ENCODE measurements at regions of chr1 and their contacts with region 1.

Region 1: DNA sequence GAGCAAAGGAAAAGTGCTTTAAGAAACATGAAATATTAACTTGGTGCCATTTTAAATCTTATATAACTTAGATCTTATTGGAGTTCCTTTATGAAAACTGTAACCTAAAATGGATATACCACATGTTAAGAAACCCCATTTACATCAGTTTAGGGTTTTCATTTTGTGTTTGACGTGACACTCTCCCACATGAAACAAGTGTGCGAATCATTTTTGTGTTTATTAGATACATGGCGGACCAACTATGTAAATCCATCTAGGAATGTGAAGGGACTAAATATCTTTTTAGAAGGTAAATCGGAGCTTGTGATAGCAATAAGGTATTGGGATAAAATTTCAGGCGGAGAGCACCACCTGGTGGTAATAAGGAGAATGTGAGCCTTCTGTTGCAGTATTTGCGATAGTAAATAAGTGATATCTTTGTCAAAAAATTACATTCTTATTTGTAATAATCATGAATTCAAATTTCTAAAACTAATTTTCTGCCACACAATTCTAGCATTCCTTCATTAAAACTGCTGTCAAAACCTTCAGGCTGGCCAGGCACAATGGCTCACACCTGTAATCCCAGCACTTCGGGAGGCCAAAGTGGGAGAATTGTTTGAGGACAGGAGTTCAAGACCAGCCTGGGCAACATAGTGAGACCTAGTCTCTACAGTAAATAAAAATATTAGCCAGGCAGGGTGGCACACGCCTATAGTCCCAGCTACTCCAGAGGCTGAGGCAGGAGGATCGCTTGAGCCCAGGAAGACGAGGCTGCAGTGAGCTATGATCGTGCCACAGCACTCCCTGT is 31.3 kb downstream of the SMAP2 start:
- DNase-seq: no peak
- ATAC-seq: peak; percentile 74
- H3K4me3 ChIP-seq: no peak overlapping the region
- H3K4me1 ChIP-seq: no peaks in the 10 kb centered on the region
- CTCF ChIP-seq: peak; percentile 53

Region 2: GRCh38 chr1:40143891-40144575 is 260.8 kb before region 1 on chr1:
- intact Hi-C with region 1: loop called in 1 of 2 experiments (anchors 10 kb)
- DNase-seq: peak in 2 of 3 donors; percentile 31 to 86
- ATAC-seq: peak; percentile 78
- H3K4me3 ChIP-seq: no peak overlapping the region
- H3K4me1 ChIP-seq: no peaks in the 10 kb centered on the region
- CTCF ChIP-seq: no peak

Region 3: GRCh38 chr1:40153073-40153770 is 251.6 kb before region 1 on chr1:
- intact Hi-C with region 1: loop called (anchors 10 kb)
- DNase-seq: peak in 1 of 3 donors; percentile 61
- ATAC-seq: peak; percentile 59
- H3K4me3 ChIP-seq: no peak overlapping the region
- H3K4me1 ChIP-seq: no peaks in the 10 kb centered on the region
- CTCF ChIP-seq: peak; percentile 47

Region 4: GRCh38 chr1:40352126-40352525 is 52.7 kb before region 1 on chr1:
- intact Hi-C with region 1: loop called in 1 of 2 experiments (anchors 10 kb)
- DNase-seq: no peak
- ATAC-seq: peak; percentile 41
- H3K4me3 ChIP-seq: no peak overlapping the region
- H3K4me1 ChIP-seq: no peaks in the 10 kb centered on the region
- CTCF ChIP-seq: no peak

Measured in mucosa of descending colon (tissue), 3 donors.